Activated CD8-positive, alpha-beta T cell treated with anti-CD3 and anti-CD28 coated beads, Interleukin-2, amount 10 ng/mL, durations not matched to agents 7 days and 5 days (primary cell): ENCODE measurements at regions of chr2 and their contacts with region 1.

Region 1: DNA sequence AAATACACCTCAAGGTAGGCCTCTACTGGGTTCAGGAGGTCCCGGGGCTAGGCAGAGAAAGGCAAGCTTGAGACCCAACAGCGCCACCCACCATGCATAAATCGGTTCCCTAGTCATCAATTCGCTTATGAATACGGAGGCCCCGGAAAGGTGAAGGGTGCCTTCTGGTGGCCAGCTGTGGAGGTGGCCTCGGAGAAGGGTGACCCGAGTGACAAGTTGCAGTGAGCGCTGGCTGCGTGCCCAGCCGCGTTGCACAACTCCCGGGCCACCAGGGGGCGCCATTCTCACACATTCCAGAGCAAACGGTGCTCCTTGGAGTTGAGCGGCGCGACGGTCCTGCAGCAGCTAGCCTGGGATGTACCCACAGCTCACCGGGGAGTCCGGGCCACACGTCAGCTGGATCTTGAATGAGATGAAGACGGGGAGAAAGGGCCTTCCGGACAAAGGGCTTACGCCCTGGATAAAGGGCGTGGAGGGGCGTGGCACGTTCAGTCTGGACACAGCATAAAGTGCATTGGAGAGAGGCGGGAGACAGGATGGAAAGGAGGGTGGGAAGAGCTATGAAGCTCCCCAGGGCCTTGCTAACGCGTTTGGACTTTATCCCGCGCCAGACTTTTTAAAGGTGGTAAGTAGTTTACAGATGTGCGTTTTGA is 20.4 kb downstream of the TMSB10 start:
- DNase-seq: peak; percentile 99
- ATAC-seq: peak; percentile 91
- H3K4me3 Mint-ChIP-seq: peak overlapping the region; percentile 89
- H3K27ac Mint-ChIP-seq: peak overlapping the region; percentile 88
- H3K4me1 Mint-ChIP-seq: peaks cover 49% of the 10 kb centered on the region
- H3K27me3 Mint-ChIP-seq: no peaks in the 10 kb centered on the region

Region 2: GRCh38 chr2:84516234-84516986 is 409.4 kb before region 1 on chr2 and contains the start of gene DNAH6:
- CTCF ChIA-PET with region 1: interaction called, 11 read pairs
- POLR2A ChIA-PET with region 1: no interaction called
- DNase-seq: peak; percentile 93
- ATAC-seq: peak; percentile 99
- H3K4me3 Mint-ChIP-seq: peak within 1 kb of the TSS; percentile 80
- H3K27ac Mint-ChIP-seq: peak within 1 kb of the TSS; percentile 40
- H3K4me1 Mint-ChIP-seq: peaks cover 22% of the 10 kb centered on the region
- H3K27me3 Mint-ChIP-seq: peaks cover 15% of the 10 kb centered on the region
- total RNA-seq, gene DNAH6: 0.68 to 0.89 TPM

Region 3: GRCh38 chr2:84846041-84846663 is 79.7 kb before region 1 on chr2:
- CTCF ChIA-PET with region 1: interaction called, 68 read pairs
- POLR2A ChIA-PET with region 1: interaction called, 3 read pairs
- DNase-seq: peak; percentile 72
- ATAC-seq: peak; percentile 75
- H3K4me3 Mint-ChIP-seq: peak overlapping the region; percentile 38
- H3K27ac Mint-ChIP-seq: peak overlapping the region; percentile 96
- H3K4me1 Mint-ChIP-seq: peaks cover 92% of the 10 kb centered on the region
- H3K27me3 Mint-ChIP-seq: no peaks in the 10 kb centered on the region

Region 4: GRCh38 chr2:84888401-84889276 is 37.2 kb before region 1 on chr2:
- CTCF ChIA-PET with region 1: interaction called, 397 read pairs
- POLR2A ChIA-PET with region 1: interaction called, 11 read pairs
- DNase-seq: peak; percentile 81
- ATAC-seq: peak; percentile 96
- H3K4me3 Mint-ChIP-seq: peak overlapping the region; percentile 70
- H3K27ac Mint-ChIP-seq: peak overlapping the region; percentile 92
- H3K4me1 Mint-ChIP-seq: peaks cover 70% of the 10 kb centered on the region
- H3K27me3 Mint-ChIP-seq: no peaks in the 10 kb centered on the region

Region 5: GRCh38 chr2:84946204-84947009 is 20.6 kb after region 1 on chr2:
- CTCF ChIA-PET with region 1: interaction called, 270 read pairs
- POLR2A ChIA-PET with region 1: interaction called, 15 read pairs
- DNase-seq: peak; percentile 77
- ATAC-seq: peak; percentile 93
- H3K4me3 Mint-ChIP-seq: peak overlapping the region; percentile 47
- H3K27ac Mint-ChIP-seq: peak overlapping the region; percentile 89
- H3K4me1 Mint-ChIP-seq: peaks cover 48% of the 10 kb centered on the region
- H3K27me3 Mint-ChIP-seq: no peaks in the 10 kb centered on the region

Region 6: DNA sequence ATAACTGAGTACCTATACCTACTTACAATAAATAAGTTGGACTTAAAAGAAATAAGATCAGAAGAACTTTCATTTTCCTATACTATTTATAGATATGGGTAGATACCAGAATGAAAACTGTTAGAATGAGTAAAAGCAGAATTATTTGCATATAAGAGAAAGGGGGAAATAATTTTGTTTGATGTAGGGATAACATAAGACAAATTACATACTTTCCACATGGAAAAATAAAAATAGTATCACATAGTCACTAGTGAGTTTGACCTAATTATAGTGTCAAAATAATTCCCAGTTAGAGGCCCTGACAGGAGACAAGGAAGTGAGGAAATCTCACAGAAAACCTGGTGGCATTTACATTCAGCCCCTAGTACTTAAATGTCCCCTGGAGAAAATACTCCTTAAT is 73.7 kb after region 1 on chr2:
- CTCF ChIA-PET with region 1: interaction called, 32 read pairs
- POLR2A ChIA-PET with region 1: no interaction called
- DNase-seq: no peak
- ATAC-seq: no peak
- H3K4me3 Mint-ChIP-seq: no peak overlapping the region
- H3K27ac Mint-ChIP-seq: no peak overlapping the region
- H3K4me1 Mint-ChIP-seq: peaks cover 48% of the 10 kb centered on the region
- H3K27me3 Mint-ChIP-seq: no peaks in the 10 kb centered on the region

Region 7: DNA sequence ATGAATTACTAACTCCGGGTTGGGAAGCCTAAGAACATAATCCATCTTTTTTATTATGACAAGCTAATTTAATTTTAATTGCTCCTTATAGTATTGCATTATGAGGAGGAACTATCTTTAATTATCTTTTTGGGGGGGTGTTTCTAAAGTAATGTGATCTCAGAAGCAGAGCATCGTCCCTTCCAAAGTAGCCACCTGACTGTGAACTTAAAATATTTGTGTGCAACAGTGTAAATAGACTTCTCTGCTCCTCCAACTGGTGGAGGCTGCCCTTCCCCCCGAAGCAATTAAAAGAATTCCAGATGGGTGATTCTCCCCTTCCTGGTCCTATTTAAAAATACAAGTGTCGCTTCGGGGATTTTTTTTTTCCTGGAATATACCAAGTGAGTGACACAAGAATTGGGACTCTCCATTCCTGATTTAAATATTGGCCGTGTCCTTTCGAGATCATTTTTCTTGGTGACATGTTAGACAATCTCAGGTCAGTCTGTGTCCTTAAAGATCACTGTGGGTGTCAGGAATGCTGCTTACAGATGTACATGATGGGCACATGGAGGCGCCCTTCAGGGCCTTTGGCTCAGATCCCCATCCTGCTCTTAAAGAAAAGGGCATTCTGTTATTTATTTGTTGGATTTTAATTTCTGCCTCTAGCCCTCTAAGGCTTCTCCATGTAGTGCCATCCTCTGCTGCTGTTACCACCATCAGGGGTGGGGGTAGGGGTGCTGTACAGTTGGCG is 263.2 kb after region 1 on chr2:
- CTCF ChIA-PET with region 1: no interaction called
- POLR2A ChIA-PET with region 1: no interaction called
- DNase-seq: no peak
- ATAC-seq: no peak
- H3K4me3 Mint-ChIP-seq: no peak overlapping the region
- H3K27ac Mint-ChIP-seq: no peak overlapping the region
- H3K4me1 Mint-ChIP-seq: peaks cover 8% of the 10 kb centered on the region
- H3K27me3 Mint-ChIP-seq: peaks cover 23% of the 10 kb centered on the region